Sigmoid colon (tissue), 7 donors: ENCODE measurements at regions of chr10 and their contacts with region 1.

Region 1: GRCh38 chr10:75508239-75508813 is 76.9 kb downstream of the LRMDA start:
- DNase-seq: no peak
- H3K4me3 ChIP-seq: no peak overlapping the region
- H3K27ac ChIP-seq: peak overlapping the region; percentile 67 to 80 (median 74)
- H3K4me1 ChIP-seq: peaks cover 0 to 59% (median 45%) of the 10 kb centered on the region in 4 donors
- H3K27me3 ChIP-seq: no peaks in the 10 kb centered on the region
- CTCF ChIP-seq: no peak
- EP300 ChIP-seq: peak in 3 of 4 donors; percentile 84 to 90 (median 89)
- POLR2A ChIP-seq: no peak

Region 2: DNA sequence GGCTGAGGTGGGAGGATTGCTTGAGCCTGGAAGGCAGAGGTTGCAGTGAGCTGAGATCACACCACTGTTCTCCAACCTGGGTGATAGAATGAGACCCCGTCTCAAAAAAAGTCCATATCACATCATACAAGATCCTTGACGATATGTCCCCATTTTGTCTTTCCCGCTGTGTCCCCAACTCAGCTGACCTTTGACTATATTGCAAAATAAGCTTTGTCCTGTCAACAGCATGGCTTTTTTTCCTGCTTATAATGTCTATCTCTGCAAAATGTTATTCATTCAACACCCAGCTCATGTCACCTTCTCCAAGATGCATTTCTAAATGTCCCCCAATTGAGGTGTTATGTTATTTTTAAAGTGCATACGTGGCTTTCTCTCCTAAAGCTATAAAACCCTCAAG is 817.9 kb before region 1 on chr10:
- intact Hi-C with region 1: no loop called
- DNase-seq: no peak
- H3K4me3 ChIP-seq: no peak overlapping the region
- H3K27ac ChIP-seq: no peak overlapping the region
- H3K4me1 ChIP-seq: no peaks in the 10 kb centered on the region
- H3K27me3 ChIP-seq: no peaks in the 10 kb centered on the region
- CTCF ChIP-seq: no peak
- EP300 ChIP-seq: no peak
- POLR2A ChIP-seq: no peak

Region 3: GRCh38 chr10:75294866-75295701 is 213.2 kb before region 1 on chr10:
- intact Hi-C with region 1: loop called (anchors 10 kb)
- DNase-seq: peak; percentile 93
- H3K4me3 ChIP-seq: peak overlapping the region; percentile 30 to 63 (median 61)
- H3K27ac ChIP-seq: peak overlapping the region; percentile 86 to 90 (median 88)
- H3K4me1 ChIP-seq: peaks cover 0 to 29% (median 25%) of the 10 kb centered on the region in 4 donors
- H3K27me3 ChIP-seq: no peaks in the 10 kb centered on the region
- CTCF ChIP-seq: peak in 2 of 4 experiments; percentile 26 to 27
- EP300 ChIP-seq: peak in 3 of 4 donors; percentile 46 to 62 (median 55)
- POLR2A ChIP-seq: no peak

Region 4: GRCh38 chr10:75408911-75409885 is 99.1 kb before region 1 on chr10:
- intact Hi-C with region 1: loop called (anchors 2 kb)
- DNase-seq: peak; percentile 87
- H3K4me3 ChIP-seq: peak overlapping the region; percentile 82 to 92 (median 87)
- H3K27ac ChIP-seq: peak overlapping the region; percentile 85 to 98 (median 88)
- H3K4me1 ChIP-seq: peaks cover 0 to 30% (median 20%) of the 10 kb centered on the region in 4 donors
- H3K27me3 ChIP-seq: no peaks in the 10 kb centered on the region
- CTCF ChIP-seq: peak in 1 of 4 experiments; percentile 5
- EP300 ChIP-seq: no peak
- POLR2A ChIP-seq: peak in 1 of 2 donors; percentile 4

Region 5: DNA sequence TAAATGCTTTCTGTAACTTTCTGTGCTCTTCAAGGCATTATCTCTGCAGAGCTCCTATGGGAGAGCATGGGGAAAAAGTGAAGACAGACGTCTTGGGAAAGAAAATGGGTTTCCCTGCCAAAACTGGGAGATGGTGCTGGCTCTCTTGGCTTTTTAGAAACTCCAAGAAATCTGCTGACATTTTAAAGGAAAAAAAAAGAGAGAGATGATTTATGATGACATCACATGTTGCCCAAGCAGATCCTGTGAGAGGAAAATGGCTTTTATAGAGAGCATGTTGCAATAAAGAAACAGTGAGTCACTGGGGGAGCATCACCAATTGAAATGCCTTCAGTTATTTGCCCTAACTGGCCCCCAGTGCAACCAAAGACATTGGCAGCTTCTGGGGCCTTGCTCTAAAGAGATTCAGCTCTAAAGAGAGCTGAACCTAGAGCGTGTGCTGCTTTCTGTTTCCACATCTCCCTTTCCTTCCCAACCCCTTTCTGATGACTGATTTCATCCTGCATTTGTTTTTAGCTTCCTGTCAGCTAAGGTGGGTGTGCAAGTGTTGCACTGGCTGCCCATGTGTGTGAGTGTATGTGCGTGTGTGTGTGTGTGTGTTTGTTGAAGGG is 39.2 kb before region 1 on chr10:
- intact Hi-C with region 1: loop called (anchors 2 kb)
- DNase-seq: peak; percentile 85
- H3K4me3 ChIP-seq: no peak overlapping the region
- H3K27ac ChIP-seq: peak overlapping the region; percentile 43 to 62 (median 54)
- H3K4me1 ChIP-seq: peaks cover 0 to 56% (median 44%) of the 10 kb centered on the region in 4 donors
- H3K27me3 ChIP-seq: no peaks in the 10 kb centered on the region
- CTCF ChIP-seq: no peak
- EP300 ChIP-seq: peak in 3 of 4 donors; percentile 32 to 72 (median 68)
- POLR2A ChIP-seq: no peak

Region 6: GRCh38 chr10:75530337-75530736 is 22.0 kb after region 1 on chr10:
- intact Hi-C with region 1: no loop called
- DNase-seq: no peak
- H3K4me3 ChIP-seq: no peak overlapping the region
- H3K27ac ChIP-seq: no peak overlapping the region
- H3K4me1 ChIP-seq: peaks cover 0 to 24% (median 6%) of the 10 kb centered on the region in 4 donors
- H3K27me3 ChIP-seq: no peaks in the 10 kb centered on the region
- CTCF ChIP-seq: no peak
- EP300 ChIP-seq: no peak
- POLR2A ChIP-seq: no peak

Region 7: GRCh38 chr10:75655791-75656451 is 147.6 kb after region 1 on chr10:
- intact Hi-C with region 1: loop called (anchors 5 kb)
- DNase-seq: no peak
- H3K4me3 ChIP-seq: no peak overlapping the region
- H3K27ac ChIP-seq: peak overlapping the region; percentile 28 to 52 (median 44)
- H3K4me1 ChIP-seq: peaks cover 0 to 59% (median 33%) of the 10 kb centered on the region in 4 donors
- H3K27me3 ChIP-seq: no peaks in the 10 kb centered on the region
- CTCF ChIP-seq: no peak
- EP300 ChIP-seq: no peak
- POLR2A ChIP-seq: no peak

Region 8: DNA sequence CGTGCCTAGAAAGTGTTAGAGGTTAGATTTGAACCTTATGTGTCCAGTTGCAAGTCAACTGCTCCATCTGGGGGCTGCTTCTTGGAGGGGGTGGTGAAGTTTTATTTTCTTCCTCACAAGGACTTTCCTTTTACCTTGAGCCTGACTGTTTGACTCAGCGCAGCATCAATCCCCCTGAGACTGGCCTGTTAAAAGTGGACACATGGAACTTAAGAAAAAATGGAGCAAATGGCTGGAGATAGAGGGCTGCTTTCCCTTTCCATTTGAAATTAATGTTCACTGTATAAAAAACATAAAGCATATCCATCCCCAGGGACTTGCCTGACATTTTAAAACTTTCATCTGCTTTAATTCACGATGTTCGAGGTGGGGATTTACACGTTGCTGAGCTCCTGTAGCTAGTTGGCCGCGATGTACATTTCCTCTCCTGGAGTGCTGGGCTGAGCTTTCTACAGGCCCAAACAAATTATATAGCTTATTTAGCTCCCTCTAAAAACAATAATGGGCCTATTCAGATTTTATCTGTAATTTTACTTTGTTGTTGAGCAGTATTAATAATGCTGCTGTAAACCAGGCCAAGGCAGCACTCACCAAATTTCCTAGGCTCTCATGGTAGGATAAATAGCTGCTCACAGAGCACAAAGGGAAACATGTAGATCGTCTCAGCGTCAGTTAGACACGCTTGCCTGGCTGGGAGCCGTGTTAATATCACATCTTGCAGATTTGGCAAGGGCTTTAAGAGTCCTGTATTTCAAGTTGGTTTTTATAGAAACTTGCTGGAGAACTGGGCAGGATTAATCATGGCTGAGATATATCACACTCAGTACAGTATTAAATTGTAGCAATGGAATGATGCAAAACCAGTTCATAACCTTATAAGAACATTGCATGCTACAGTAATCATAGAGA is 174.6 kb after region 1 on chr10:
- intact Hi-C with region 1: loop called (anchors 5 kb)
- DNase-seq: peak; percentile 84
- H3K4me3 ChIP-seq: no peak overlapping the region
- H3K27ac ChIP-seq: peak overlapping the region; percentile 40 to 75 (median 72)
- H3K4me1 ChIP-seq: peaks cover 0 to 36% (median 24%) of the 10 kb centered on the region in 4 donors
- H3K27me3 ChIP-seq: no peaks in the 10 kb centered on the region
- CTCF ChIP-seq: no peak
- EP300 ChIP-seq: peak in 1 of 4 donors; percentile 1
- POLR2A ChIP-seq: no peak